Endothelial cell of umbilical vein (primary cell): ENCODE measurements at regions of chr2 and their contacts with region 1.

Region 1: GRCh38 chr2:181953881-181954537 is 31.6 kb upstream of the PPP1R1C start:
- DNase-seq: peak; percentile 81
- H3K4me3 ChIP-seq: peak overlapping the region; percentile 33 to 42 (median 39)
- H3K27ac ChIP-seq: peak overlapping the region; percentile 74
- H3K4me1 ChIP-seq: peaks cover 29% of the 10 kb centered on the region
- H3K27me3 ChIP-seq: no peaks in the 10 kb centered on the region
- CTCF ChIP-seq: peak; percentile 47 to 63
- POLR2A ChIP-seq: no peak

Region 2: GRCh38 chr2:181374781-181375675 is 579.0 kb before region 1 on chr2:
- CTCF ChIA-PET with region 1: no interaction called
- POLR2A ChIA-PET with region 1: no interaction called
- dilution Hi-C with region 1: no loop called
- intact Hi-C with region 1: no loop called
- DNase-seq: no peak
- H3K4me3 ChIP-seq: no peak overlapping the region
- H3K27ac ChIP-seq: no peak overlapping the region
- H3K4me1 ChIP-seq: peaks cover 2% of the 10 kb centered on the region
- H3K27me3 ChIP-seq: peaks cover 0 to 2% of the 10 kb centered on the region in 2 experiments
- CTCF ChIP-seq: no peak
- POLR2A ChIP-seq: no peak

Region 3: DNA sequence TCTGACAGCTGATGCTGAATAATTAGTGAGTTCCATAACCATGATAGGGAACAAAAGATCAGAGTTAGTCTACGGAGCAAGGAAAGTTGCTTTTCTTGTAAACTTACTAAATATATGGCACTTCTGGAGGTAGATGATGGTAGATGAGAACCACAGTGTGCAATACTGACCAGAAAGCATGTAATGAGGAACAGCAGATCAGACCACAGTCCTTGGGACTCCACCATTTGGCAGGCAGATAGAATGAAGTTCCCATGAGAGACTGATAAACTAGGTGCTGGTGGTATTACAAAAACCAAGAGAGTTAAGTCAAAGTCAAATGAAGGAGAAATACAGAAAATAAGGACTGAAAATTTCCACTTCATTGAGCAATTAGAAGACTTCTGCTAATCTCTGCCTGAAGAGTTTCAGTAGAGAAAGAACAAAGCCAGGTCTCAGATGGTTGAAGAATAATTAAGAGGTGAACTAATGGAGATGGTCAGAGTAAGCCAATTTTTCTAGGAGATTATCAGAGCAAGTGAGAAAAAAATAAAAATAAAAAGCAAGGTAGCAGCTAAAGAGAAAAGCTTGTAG is 307.5 kb before region 1 on chr2:
- CTCF ChIA-PET with region 1: no interaction called
- POLR2A ChIA-PET with region 1: no interaction called
- dilution Hi-C with region 1: no loop called
- intact Hi-C with region 1: no loop called
- DNase-seq: no peak
- H3K4me3 ChIP-seq: no peak overlapping the region
- H3K27ac ChIP-seq: no peak overlapping the region
- H3K4me1 ChIP-seq: no peaks in the 10 kb centered on the region
- H3K27me3 ChIP-seq: no peaks in the 10 kb centered on the region
- CTCF ChIP-seq: no peak
- POLR2A ChIP-seq: no peak

Region 4: GRCh38 chr2:181790716-181791649 is 163.0 kb before region 1 on chr2:
- CTCF ChIA-PET with region 1: no interaction called
- POLR2A ChIA-PET with region 1: no interaction called
- dilution Hi-C with region 1: no loop called
- intact Hi-C with region 1: loop called (anchors 1 kb)
- DNase-seq: peak; percentile 99
- H3K4me3 ChIP-seq: no peak overlapping the region
- H3K27ac ChIP-seq: peak overlapping the region; percentile 96
- H3K4me1 ChIP-seq: peaks cover 45% of the 10 kb centered on the region
- H3K27me3 ChIP-seq: no peaks in the 10 kb centered on the region
- CTCF ChIP-seq: no peak
- POLR2A ChIP-seq: peak; percentile 72

Region 5: DNA sequence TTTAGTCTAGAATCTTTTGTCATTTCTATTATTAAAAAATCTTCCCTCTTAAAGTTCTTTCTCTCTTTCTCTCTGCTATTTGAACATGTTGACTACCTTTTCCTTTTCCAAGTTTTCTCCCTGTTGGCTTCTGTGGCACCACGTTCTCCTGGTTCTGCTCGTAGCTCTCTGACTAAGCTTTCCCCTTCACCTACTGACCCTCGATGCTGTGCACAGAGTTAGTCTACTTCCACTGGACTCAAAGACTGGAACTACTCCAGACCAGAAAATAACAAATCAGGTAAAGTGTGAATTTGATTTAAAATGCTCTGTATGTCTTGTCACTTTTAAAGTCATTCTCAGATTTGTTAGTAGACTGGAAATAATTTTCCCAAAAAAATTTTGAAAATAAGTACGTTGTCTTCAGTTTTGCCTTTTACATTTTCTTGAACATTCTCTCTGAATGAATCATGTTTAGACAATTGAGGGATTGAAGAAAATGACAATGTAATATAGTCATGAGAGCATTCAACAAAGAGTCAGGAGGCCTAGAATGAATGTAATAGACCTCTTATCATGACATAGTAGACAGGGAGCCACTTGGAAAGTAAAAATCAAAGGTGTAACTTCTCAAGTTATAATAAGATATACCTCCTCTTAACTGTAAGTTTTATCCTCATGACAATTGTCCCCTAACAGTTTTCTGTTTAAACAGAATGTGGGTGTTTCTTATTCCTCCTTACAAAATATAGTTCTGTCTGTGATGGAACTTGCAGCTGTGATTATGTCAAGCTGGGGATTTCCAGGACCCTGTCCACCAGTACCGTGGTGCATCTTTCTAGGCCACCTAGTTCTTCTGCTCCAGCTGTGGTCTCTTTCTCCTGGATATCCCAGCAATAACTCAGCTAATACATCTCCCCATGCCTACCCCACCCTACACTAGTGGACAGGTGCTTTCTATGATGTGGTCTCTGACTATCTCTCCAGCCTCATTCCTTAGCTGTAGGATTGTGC is 37.0 kb before region 1 on chr2:
- CTCF ChIA-PET with region 1: interaction called, 9 read pairs
- POLR2A ChIA-PET with region 1: no interaction called
- dilution Hi-C with region 1: no loop called
- intact Hi-C with region 1: loop called (anchors 2 kb)
- DNase-seq: peak; percentile 79
- H3K4me3 ChIP-seq: no peak overlapping the region
- H3K27ac ChIP-seq: peak overlapping the region; percentile 14
- H3K4me1 ChIP-seq: peaks cover 38% of the 10 kb centered on the region
- H3K27me3 ChIP-seq: no peaks in the 10 kb centered on the region
- CTCF ChIP-seq: no peak
- POLR2A ChIP-seq: no peak

Region 6: GRCh38 chr2:181937473-181937872 is 16.5 kb before region 1 on chr2:
- CTCF ChIA-PET with region 1: interaction called, 22 read pairs
- POLR2A ChIA-PET with region 1: no interaction called
- dilution Hi-C with region 1: no loop called
- intact Hi-C with region 1: no loop called
- DNase-seq: no peak
- H3K4me3 ChIP-seq: no peak overlapping the region
- H3K27ac ChIP-seq: no peak overlapping the region
- H3K4me1 ChIP-seq: no peaks in the 10 kb centered on the region
- H3K27me3 ChIP-seq: no peaks in the 10 kb centered on the region
- CTCF ChIP-seq: no peak
- POLR2A ChIP-seq: no peak

Region 7: GRCh38 chr2:182066400-182067087 is 112.5 kb after region 1 on chr2:
- CTCF ChIA-PET with region 1: interaction called, 11 read pairs
- POLR2A ChIA-PET with region 1: no interaction called
- dilution Hi-C with region 1: no loop called
- intact Hi-C with region 1: loop called (anchors 2 kb)
- DNase-seq: peak; percentile 91
- H3K4me3 ChIP-seq: no peak overlapping the region
- H3K27ac ChIP-seq: no peak overlapping the region
- H3K4me1 ChIP-seq: peaks cover 25% of the 10 kb centered on the region
- H3K27me3 ChIP-seq: no peaks in the 10 kb centered on the region
- CTCF ChIP-seq: no peak
- POLR2A ChIP-seq: no peak